Activated CD8-positive, alpha-beta memory T cell treated with anti-CD3 and anti-CD28 coated beads, Interleukin-2, amount 10 ng/mL, durations not matched to agents 7 days and 5 days (primary cell): ENCODE measurements at regions of chr4 and their contacts with region 1.

Region 1: GRCh38 chr4:108018040-108018883 is 28.6 kb downstream of the HADH start:
- DNase-seq: peak; percentile 85
- ATAC-seq: peak; percentile 66
- H3K4me3 Mint-ChIP-seq: no peak overlapping the region
- H3K27ac Mint-ChIP-seq: no peak overlapping the region
- H3K4me1 Mint-ChIP-seq: peaks cover 9% of the 10 kb centered on the region
- H3K27me3 Mint-ChIP-seq: no peaks in the 10 kb centered on the region

Region 2: GRCh38 chr4:108030332-108030731 is 12.1 kb after region 1 on chr4:
- CTCF ChIA-PET with region 1: interaction called, 37 read pairs
- DNase-seq: peak; percentile 74
- ATAC-seq: peak; percentile 87
- H3K4me3 Mint-ChIP-seq: no peak overlapping the region
- H3K27ac Mint-ChIP-seq: peak overlapping the region; percentile 74
- H3K4me1 Mint-ChIP-seq: peaks cover 30% of the 10 kb centered on the region
- H3K27me3 Mint-ChIP-seq: no peaks in the 10 kb centered on the region

Region 3: GRCh38 chr4:108036213-108036612 is 18.0 kb after region 1 on chr4:
- CTCF ChIA-PET with region 1: interaction called, 11 read pairs
- DNase-seq: peak; percentile 70
- ATAC-seq: peak; percentile 84
- H3K4me3 Mint-ChIP-seq: no peak overlapping the region
- H3K27ac Mint-ChIP-seq: peak overlapping the region; percentile 74
- H3K4me1 Mint-ChIP-seq: peaks cover 20% of the 10 kb centered on the region
- H3K27me3 Mint-ChIP-seq: no peaks in the 10 kb centered on the region

Region 4: GRCh38 chr4:108492816-108493595 is 474.7 kb after region 1 on chr4:
- CTCF ChIA-PET with region 1: interaction called, 16 read pairs
- DNase-seq: peak; percentile 45
- ATAC-seq: no peak
- H3K4me3 Mint-ChIP-seq: no peak overlapping the region
- H3K27ac Mint-ChIP-seq: no peak overlapping the region
- H3K4me1 Mint-ChIP-seq: no peaks in the 10 kb centered on the region
- H3K27me3 Mint-ChIP-seq: peaks cover 9% of the 10 kb centered on the region

Region 5: GRCh38 chr4:108570993-108571569 is 552.8 kb after region 1 on chr4:
- CTCF ChIA-PET with region 1: interaction called, 23 read pairs
- DNase-seq: no peak
- ATAC-seq: no peak
- H3K4me3 Mint-ChIP-seq: no peak overlapping the region
- H3K27ac Mint-ChIP-seq: no peak overlapping the region
- H3K4me1 Mint-ChIP-seq: peaks cover 9% of the 10 kb centered on the region
- H3K27me3 Mint-ChIP-seq: peaks cover 3% of the 10 kb centered on the region